HEK293 (cell line): ENCODE measurements at regions of chr20 and their contacts with region 1.

Region 1: GRCh38 chr20:32779500-32780211 is 17.5 kb downstream of the DNMT3B start:
- H3K4me3 ChIP-seq: no peak overlapping the region
- H3K27ac ChIP-seq: no peak overlapping the region
- H3K4me1 ChIP-seq: peaks cover 3% of the 10 kb centered on the region; the same call in 1 of the 2 replicates
- CTCF ChIP-seq: no peak

Region 2: GRCh38 chr20:32296819-32297420 is 482.7 kb before region 1 on chr20:
- CTCF ChIA-PET with region 1: no interaction called
- POLR2A ChIA-PET with region 1: interaction called, 10 read pairs
- H3K4me3 ChIP-seq: no peak overlapping the region
- H3K27ac ChIP-seq: no peak overlapping the region
- H3K4me1 ChIP-seq: no peaks in the 10 kb centered on the region
- CTCF ChIP-seq: no peak

Region 3: DNA sequence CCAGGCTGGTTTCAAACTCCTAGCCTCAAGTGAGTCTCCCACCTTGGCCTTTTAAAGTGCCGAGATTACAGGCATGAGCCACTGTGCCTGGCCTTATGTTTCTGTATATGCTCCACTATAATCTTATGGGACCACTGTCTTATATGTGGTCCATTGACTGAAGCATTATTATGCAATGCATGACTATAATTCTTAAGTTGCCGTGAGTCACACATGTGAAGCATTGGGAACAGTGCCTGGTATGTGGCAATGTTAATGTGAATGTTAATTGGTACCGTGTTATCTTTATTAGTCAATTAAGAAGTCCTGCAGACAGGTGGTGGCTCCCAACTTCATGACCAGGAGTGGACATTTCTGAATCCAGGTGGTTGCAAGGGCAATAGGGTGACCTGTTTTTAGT is 436.2 kb before region 1 on chr20:
- CTCF ChIA-PET with region 1: no interaction called
- POLR2A ChIA-PET with region 1: no interaction called
- H3K4me3 ChIP-seq: no peak overlapping the region
- H3K27ac ChIP-seq: no peak overlapping the region
- H3K4me1 ChIP-seq: no peaks in the 10 kb centered on the region
- CTCF ChIP-seq: no peak

Region 4: GRCh38 chr20:32433311-32434021 is 346.2 kb before region 1 on chr20:
- CTCF ChIA-PET with region 1: no interaction called
- POLR2A ChIA-PET with region 1: no interaction called
- H3K4me3 ChIP-seq: no peak overlapping the region
- H3K27ac ChIP-seq: no peak overlapping the region
- H3K4me1 ChIP-seq: no peaks in the 10 kb centered on the region
- CTCF ChIP-seq: no peak

Region 5: DNA sequence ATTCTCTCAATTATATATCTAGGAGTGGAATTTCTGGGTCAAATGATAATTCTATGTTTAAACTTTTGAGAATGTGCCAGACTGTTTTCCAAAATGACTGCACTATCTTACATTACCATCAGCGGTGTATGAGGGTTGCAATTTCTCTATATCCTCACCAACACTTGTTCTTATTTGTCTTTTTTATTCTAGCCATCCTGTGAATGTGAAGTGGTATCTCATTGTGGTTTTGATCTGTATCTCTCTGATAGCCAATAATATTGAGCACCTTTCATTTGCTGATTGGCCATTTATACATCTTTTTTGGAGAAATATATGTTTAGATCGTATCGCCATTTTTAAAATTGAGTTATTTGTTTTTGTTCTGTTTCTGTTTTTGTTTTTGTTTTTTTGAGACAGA is 138.2 kb before region 1 on chr20:
- CTCF ChIA-PET with region 1: no interaction called
- POLR2A ChIA-PET with region 1: no interaction called
- H3K4me3 ChIP-seq: no peak overlapping the region
- H3K27ac ChIP-seq: no peak overlapping the region
- H3K4me1 ChIP-seq: no peaks in the 10 kb centered on the region
- CTCF ChIP-seq: no peak

Region 6: GRCh38 chr20:32681175-32682084 is 98.2 kb before region 1 on chr20:
- CTCF ChIA-PET with region 1: interaction called, 244 read pairs
- POLR2A ChIA-PET with region 1: interaction called, 3 read pairs
- H3K4me3 ChIP-seq: no peak overlapping the region
- H3K27ac ChIP-seq: no peak overlapping the region
- H3K4me1 ChIP-seq: no peaks in the 10 kb centered on the region
- CTCF ChIP-seq: no peak

Region 7: GRCh38 chr20:32762149-32762753 is 17.4 kb before region 1 on chr20 and contains the start of gene DNMT3B:
- CTCF ChIA-PET with region 1: interaction called, 40 read pairs
- POLR2A ChIA-PET with region 1: interaction called, 5 read pairs
- H3K4me3 ChIP-seq: peak within 1 kb of the TSS; percentile 77
- H3K27ac ChIP-seq: peak within 1 kb of the TSS; percentile 65
- H3K4me1 ChIP-seq: no peaks in the 10 kb centered on the region
- CTCF ChIP-seq: no peak

Region 8: GRCh38 chr20:32789896-32790750 is 10.5 kb after region 1 on chr20:
- CTCF ChIA-PET with region 1: interaction called, 16 read pairs
- POLR2A ChIA-PET with region 1: no interaction called
- H3K4me3 ChIP-seq: no peak overlapping the region
- H3K27ac ChIP-seq: no peak overlapping the region
- H3K4me1 ChIP-seq: no peaks in the 10 kb centered on the region
- CTCF ChIP-seq: peak; percentile 77

Region 9: DNA sequence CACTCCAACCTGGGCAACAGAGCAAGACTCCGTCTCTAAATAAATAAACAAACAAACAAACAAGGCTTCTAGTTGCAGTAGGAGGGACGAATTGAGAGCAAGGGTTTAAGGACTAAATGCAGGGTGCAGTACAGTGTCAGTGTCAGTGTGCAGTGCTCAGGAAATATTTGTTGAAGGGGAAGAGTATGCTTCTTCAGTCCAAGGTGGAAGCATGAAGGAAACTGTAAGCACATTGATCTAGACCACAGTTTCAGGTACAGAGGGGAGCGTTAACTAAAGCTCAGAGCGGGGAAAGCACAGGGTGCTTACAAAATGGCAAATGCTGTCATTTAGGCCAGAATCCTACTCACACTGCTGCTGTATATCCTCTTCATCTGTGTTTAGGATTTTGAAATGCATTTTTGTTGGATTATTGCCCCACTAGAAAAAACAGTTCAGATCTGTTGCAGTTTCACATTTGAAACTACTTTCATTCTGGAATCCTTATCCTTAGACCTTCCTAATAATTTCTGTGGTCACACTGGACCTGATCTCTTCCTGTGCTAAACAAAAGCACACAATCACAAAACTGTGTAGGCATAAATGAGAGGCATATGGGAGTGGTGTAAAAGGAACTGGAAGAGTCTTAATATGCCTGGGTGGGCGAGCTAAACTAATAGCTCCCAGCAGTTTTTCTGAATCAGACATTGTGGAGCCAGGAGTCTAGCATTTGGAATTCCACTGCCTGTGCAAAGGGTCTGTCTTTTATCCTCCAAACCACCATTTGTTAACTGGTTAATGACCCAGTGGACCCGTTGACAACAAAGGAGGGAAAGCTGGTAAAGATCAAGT is 751.6 kb after region 1 on chr20:
- CTCF ChIA-PET with region 1: no interaction called
- POLR2A ChIA-PET with region 1: no interaction called
- H3K4me3 ChIP-seq: no peak overlapping the region
- H3K27ac ChIP-seq: no peak overlapping the region
- H3K4me1 ChIP-seq: no peaks in the 10 kb centered on the region
- CTCF ChIP-seq: no peak